ENCODE measurements at regions of chr1 and their contacts with region 1.

Region 1: DNA sequence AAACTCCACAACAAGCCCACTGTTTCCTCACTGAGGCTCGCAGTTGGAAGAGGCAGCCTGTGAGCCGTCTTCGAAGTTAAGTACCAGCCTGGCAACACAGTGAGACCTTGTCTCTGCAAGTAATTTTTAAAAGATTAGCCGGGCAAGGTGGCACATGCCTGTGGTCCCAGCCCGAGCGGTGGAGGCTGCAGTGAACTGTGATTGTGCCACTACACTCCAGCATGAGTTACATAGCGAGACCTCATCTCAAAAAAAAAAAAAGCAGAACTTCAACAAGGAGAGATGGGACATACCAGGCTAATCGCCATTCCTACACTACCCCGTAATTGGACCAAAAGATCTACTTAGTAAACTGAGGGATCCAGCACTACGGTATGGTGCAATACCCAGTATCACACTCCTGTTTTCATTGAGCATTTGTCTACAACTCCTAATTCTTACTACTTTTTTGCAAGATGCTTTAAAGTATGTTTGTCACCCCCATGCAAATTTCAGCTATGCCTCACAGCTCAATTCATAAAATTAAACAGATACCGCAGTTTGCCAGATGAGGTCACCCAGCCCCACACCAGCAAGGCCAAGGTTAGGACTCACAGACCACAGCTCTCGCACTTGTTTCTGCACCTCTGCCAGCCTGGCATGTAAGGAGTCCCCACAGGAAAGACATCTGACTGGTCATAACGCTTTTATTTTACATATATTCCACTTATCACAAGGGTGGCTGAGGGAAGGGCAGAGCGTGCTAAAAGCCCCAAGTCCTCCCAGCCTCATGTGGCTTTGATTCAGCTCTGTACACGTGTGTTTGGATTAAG is 21.0 kb downstream of the SDE2 start:
- DNase-seq: no peak
- ATAC-seq: no peak
- H3K4me3 ChIP-seq: no peak overlapping the region
- H3K27ac ChIP-seq: no peak overlapping the region
- H3K4me1 ChIP-seq: peaks cover 0 to 12% (median 0%) of the 10 kb centered on the region in 12 donors
- H3K27me3 ChIP-seq: no peaks in the 10 kb centered on the region
- CTCF ChIP-seq: no peak
- POLR2A ChIP-seq: no peak

Region 2: GRCh38 chr1:225474986-225475820 is 502.9 kb before region 1 on chr1:
- intact Hi-C with region 1: loop called (anchors 1 to 5 kb)
- DNase-seq: peak; percentile 62 to 88 (median 66)
- ATAC-seq: peak; percentile 69 to 91 (median 88)
- H3K4me3 ChIP-seq: peak overlapping the region in 5 of 12 donors; percentile 10 to 35 (median 26)
- H3K27ac ChIP-seq: peak overlapping the region in 1 of 12 donors; percentile 13
- H3K4me1 ChIP-seq: peaks cover 0 to 11% (median 5%) of the 10 kb centered on the region in 12 donors
- H3K27me3 ChIP-seq: no peaks in the 10 kb centered on the region
- CTCF ChIP-seq: peak in 11 of 12 donors; percentile 100
- POLR2A ChIP-seq: no peak

Region 3: GRCh38 chr1:225777583-225778336 is 200.4 kb before region 1 on chr1 and contains the start of gene SRP9:
- intact Hi-C with region 1: loop called in 8 of 10 experiments (anchors 5 to 10 kb)
- DNase-seq: peak; percentile 99 to 100 (median 100)
- ATAC-seq: peak; percentile 100
- H3K4me3 ChIP-seq: peak within 1 kb of the TSS; percentile 49 to 99 (median 78)
- H3K27ac ChIP-seq: peak within 1 kb of the TSS; percentile 85 to 97 (median 92)
- H3K4me1 ChIP-seq: peaks cover 0 to 65% (median 43%) of the 10 kb centered on the region in 12 donors
- H3K27me3 ChIP-seq: no peaks in the 10 kb centered on the region
- CTCF ChIP-seq: peak; percentile 75 to 98 (median 91)
- POLR2A ChIP-seq: peak in 1 of 2 donors; percentile 77
- total RNA-seq, gene SRP9: 151 to 187 (median 171) TPM

Region 4: DNA sequence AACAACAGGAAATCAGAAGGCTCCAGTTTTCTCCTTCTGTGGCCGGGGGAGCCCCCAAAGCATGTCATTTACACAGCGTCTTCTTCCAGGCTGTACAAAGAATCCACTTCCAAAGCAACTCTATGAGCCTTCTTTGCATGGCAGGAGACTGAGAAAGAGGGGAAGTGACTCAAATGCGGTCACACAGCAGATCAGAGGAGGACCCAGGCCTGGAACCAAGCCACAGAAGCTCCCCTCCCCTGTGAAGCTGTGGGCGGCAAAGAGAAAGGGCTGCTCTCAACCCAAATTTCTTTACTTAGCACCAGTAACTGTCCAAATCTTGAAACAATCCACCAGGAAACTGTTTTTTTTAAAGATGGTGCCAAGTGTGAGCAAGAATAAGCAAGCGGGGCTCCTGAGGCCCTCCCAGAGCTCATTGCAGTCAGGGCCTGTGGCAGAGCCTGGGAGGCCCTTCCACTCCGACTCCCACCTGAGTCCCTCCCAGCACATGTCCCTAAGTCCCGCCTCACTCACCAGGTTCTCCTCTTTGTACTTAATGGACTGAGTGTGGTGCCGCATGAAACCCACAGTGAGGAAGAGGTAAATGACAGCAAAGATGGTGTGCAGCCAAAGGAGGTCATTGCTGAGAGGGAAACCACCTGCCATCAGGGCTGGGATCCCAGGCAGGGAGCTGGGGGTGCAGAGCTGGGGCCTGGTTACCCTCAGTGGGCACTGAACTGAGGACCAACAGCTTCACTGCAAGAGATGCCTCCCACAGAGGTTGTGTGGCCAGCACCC is 111.9 kb before region 1 on chr1:
- intact Hi-C with region 1: loop called in 2 of 10 experiments (anchors 10 kb)
- DNase-seq: no peak
- ATAC-seq: no peak
- H3K4me3 ChIP-seq: no peak overlapping the region
- H3K27ac ChIP-seq: peak overlapping the region in 2 of 12 donors; percentile 22 to 44
- H3K4me1 ChIP-seq: peaks cover 0 to 19% (median 0%) of the 10 kb centered on the region in 12 donors
- H3K27me3 ChIP-seq: no peaks in the 10 kb centered on the region
- CTCF ChIP-seq: no peak
- POLR2A ChIP-seq: no peak

Region 5: GRCh38 chr1:225911191-225912130 is 66.7 kb before region 1 on chr1:
- intact Hi-C with region 1: loop called in 6 of 10 experiments (anchors 2 to 10 kb)
- DNase-seq: peak; percentile 51 to 89 (median 68)
- ATAC-seq: peak; percentile 71 to 93 (median 86)
- H3K4me3 ChIP-seq: peak overlapping the region in 8 of 12 donors; percentile 3 to 40 (median 17)
- H3K27ac ChIP-seq: no peak overlapping the region
- H3K4me1 ChIP-seq: peaks cover 0 to 10% (median 5%) of the 10 kb centered on the region in 12 donors
- H3K27me3 ChIP-seq: no peaks in the 10 kb centered on the region
- CTCF ChIP-seq: peak; percentile 84 to 99 (median 96)
- POLR2A ChIP-seq: no peak